GM10248 (cell line): ENCODE measurements at regions of chr18 and their contacts with region 1.

Region 1: DNA sequence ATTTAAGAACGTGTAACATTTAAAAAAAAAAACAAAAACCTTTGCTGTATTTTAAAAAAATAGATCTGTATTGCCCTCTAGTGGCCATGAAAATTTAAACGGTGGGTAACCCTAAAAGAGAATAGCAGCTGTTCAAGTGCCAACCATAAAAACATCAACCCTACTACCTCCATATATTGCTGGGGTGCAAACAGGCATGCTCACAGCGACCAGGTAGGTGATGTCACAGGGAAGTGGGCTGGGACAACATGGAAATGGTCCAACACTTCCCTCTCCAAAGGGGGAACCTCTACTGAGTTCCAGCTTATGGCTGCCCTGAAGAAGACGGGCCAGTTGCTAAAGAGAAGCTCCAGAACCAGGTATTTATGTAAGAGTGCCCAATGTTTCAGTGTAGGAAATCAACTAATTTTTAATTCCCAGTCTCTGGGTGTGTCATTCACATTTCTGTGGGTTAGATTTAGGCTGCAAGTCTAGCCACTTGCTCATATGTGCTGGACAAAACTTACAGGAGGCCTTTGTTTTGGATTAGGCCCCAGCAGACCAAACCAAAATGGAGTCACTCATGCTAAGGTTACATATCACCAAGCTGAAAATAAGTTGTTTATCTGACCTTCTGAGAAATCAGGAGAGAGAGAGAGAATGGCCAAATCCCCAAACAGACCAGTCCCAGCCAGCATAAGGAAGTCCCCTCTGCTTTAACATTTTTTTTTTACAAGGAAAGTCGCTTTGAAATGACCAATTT is 54.5 kb downstream of the SKA1 start:
- DNase-seq: peak; percentile 38
- CTCF ChIP-seq: peak; percentile 38

Region 2: DNA sequence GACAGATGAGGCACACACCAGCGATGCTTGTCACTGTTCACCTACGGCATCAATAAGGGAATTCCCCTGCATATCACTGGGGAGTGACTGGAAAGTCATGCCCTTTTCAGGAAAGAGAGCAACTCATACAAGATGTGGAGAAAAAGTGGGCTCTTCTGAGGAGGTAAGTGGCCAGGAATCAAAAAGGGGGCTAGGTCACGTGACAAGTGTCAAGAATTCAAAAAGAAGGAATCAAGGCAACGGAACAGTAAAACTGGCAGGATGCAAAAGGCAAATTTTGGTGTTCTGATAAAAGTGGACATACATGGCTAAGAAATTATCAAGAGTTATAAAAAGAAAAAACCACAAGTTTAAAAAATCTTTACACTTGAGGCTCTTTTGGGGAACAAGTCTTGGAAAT is 425.4 kb before region 1 on chr18:
- CTCF ChIA-PET with region 1: interaction called, 10 read pairs
- POLR2A ChIA-PET with region 1: no interaction called
- DNase-seq: no peak
- CTCF ChIP-seq: no peak

Region 3: DNA sequence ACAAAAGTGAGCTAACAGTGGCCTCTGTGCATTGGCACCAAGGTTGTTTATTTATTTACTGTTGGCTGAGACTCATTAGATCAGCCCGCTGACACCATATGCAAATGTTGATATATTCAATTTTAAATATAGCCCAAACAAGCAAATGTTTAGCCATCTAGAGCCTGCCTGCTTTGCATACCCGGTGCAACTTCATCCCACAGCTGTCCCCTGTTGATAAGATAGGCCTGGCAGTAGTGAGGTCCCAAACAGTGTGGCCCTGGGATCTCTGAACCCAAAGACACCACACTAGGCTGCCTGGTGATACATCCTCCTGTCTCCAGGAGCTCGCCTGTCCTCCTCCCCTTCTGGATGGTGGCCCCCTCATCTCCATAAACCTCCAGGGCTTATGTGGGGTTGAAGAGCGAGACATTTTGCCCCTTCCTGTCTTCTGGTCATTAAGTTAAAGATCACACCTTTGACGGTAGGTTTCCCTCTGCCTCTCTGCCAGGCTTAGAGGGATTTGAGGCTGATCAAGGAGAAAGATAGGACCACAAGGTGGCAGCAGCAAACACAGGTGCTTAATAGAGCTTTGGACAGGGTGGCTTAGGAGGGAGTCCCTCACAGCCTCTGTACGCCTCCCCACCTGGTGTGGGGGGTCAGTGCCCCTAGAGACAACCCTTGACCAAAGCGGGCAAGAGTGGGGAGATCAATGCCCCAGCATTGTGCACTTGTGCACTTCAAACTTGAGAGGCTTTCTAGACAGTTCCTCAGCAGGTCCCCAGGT is 210.8 kb before region 1 on chr18:
- CTCF ChIA-PET with region 1: interaction called, 19 read pairs
- POLR2A ChIA-PET with region 1: no interaction called
- DNase-seq: peak; percentile 59
- CTCF ChIP-seq: peak; percentile 39

Region 4: GRCh38 chr18:50419131-50419530 is 10.2 kb before region 1 on chr18:
- CTCF ChIA-PET with region 1: interaction called, 14 read pairs
- POLR2A ChIA-PET with region 1: no interaction called
- DNase-seq: no peak
- CTCF ChIP-seq: no peak

Region 5: GRCh38 chr18:50447102-50447741 is 17.8 kb after region 1 on chr18:
- CTCF ChIA-PET with region 1: interaction called, 23 read pairs
- POLR2A ChIA-PET with region 1: no interaction called
- DNase-seq: no peak
- CTCF ChIP-seq: no peak

Region 6: DNA sequence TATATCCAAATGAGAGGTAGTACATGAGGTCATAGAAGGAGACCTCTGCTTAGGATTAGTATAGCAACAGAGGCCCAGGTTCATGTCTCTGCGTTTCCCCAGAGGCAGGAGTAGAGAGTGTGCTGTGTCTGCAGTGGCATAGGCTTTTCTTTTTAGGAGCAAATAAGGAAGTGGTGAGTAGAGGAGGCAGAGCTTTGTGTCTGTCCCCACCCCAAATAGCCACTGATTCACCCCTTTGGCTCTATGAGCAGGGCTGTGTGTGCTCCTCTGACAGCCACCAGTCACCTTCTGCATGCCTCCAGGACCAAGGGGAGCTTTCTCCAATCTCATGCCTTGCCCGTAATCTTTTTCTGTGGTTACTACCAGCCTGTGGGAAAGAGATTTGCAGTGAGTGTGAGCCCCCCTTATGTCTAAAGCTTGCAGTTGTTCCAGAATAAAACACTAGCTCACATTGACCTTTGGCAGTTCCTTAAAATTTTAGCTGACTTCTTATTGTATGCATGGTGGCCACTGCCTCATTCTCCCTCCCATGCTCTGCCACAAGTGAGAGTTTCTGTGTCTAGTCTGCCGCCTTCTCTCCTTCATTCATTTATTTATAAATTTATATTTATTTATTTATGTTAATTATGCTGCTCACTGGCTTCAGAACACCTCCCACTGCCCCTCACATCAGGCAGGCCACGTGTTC is 515.0 kb after region 1 on chr18:
- CTCF ChIA-PET with region 1: no interaction called
- POLR2A ChIA-PET with region 1: no interaction called
- DNase-seq: no peak
- CTCF ChIP-seq: no peak